Testis (tissue), 5 donors: ENCODE measurements at regions of chr4 and their contacts with region 1.

Region 1: DNA sequence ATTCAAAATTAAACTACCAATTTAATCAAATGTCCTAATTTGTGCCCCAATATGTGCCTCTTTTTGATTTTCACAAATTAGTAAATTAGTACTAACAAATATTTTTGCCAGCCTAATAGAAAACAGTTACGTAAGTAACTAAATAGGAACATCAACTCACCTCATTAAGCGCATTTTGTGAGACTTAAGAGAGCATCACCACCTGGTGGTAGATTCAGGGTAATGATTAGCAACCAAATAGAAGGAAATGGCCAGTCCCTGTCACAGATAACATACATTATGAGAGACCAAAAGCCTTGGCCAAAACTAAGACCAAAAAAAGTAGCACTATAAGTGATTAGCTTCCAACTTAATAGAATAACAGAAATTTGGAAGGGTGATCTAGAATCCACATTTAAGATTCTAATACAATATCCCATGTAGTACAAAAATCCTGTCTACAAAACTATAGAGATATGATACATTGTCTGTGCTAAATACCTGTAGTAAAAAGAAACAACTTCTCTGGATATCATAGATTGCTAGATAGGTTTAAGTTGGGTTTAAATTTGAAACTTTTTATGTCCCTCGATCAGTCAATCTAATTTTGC is 46.7 kb downstream of the C4orf46 start:
- DNase-seq: peak; percentile 23
- H3K4me3 ChIP-seq: no peak overlapping the region
- H3K27ac ChIP-seq: no peak overlapping the region
- H3K4me1 ChIP-seq: no peaks in the 10 kb centered on the region
- H3K27me3 ChIP-seq: no peaks in the 10 kb centered on the region
- CTCF ChIP-seq: peak; percentile 61 to 65 (median 64)
- POLR2A ChIP-seq: no peak

Region 2: DNA sequence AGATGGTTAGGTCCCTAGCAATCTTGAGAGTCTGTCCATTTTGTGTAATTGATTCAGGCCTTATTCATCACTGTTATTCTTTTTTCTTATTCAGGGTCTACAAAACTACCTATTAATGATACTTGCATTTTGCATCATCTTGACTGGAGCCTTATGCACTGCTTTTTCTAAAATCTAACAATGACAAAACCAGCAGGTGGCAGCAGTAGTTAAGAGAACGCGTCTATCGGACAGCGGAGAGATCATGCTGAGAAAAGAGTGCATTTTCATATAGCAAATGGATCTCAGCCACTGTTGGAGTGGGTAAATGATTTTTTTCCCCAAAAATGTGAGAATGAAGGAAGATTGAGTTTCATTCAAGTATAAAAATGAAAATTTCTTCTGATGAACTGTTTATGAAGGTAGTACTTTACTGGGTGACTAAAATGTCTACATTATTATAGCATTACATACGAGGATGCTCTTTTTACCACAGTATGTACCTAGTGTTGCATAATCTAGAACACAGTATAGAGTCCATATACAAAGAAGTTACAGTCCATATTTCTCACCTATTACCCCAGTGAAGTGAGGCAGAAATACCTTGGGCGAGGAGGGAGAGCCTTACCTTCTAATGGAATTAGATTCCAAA is 371.5 kb before region 1 on chr4:
- intact Hi-C with region 1: loop called (anchors 10 kb)
- DNase-seq: peak; percentile 73
- H3K4me3 ChIP-seq: no peak overlapping the region
- H3K27ac ChIP-seq: no peak overlapping the region
- H3K4me1 ChIP-seq: no peaks in the 10 kb centered on the region
- H3K27me3 ChIP-seq: no peaks in the 10 kb centered on the region
- CTCF ChIP-seq: peak; percentile 42 to 50 (median 49)
- POLR2A ChIP-seq: no peak

Region 3: GRCh38 chr4:158384407-158384806 is 240.6 kb before region 1 on chr4:
- intact Hi-C with region 1: no loop called
- DNase-seq: no peak
- H3K4me3 ChIP-seq: no peak overlapping the region
- H3K27ac ChIP-seq: no peak overlapping the region
- H3K4me1 ChIP-seq: no peaks in the 10 kb centered on the region
- H3K27me3 ChIP-seq: no peaks in the 10 kb centered on the region
- CTCF ChIP-seq: no peak
- POLR2A ChIP-seq: no peak

Region 4: DNA sequence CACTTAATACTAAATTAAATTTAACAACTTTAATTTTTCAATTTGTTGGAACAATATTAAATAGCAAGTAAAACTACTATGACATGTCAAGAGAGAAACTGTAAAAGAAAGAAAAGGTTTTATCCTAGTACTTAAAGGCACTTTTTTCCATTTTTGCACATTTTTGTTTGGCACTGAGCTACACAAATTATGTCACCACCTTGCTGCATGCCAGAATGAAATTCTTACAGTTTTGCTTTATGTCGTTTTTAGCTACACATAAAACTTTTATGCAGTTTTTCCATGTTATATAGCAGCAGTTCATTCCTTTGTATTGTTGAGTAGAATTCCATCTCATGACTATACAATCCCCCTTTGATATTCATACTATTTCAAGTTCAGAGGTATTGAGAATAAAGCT is 202.4 kb before region 1 on chr4:
- intact Hi-C with region 1: no loop called
- DNase-seq: no peak
- H3K4me3 ChIP-seq: no peak overlapping the region
- H3K27ac ChIP-seq: no peak overlapping the region
- H3K4me1 ChIP-seq: no peaks in the 10 kb centered on the region
- H3K27me3 ChIP-seq: no peaks in the 10 kb centered on the region
- CTCF ChIP-seq: no peak
- POLR2A ChIP-seq: no peak